Posterior vena cava (tissue), 2 donors: ENCODE measurements at regions of chr4 and their contacts with region 1.

Region 1: DNA sequence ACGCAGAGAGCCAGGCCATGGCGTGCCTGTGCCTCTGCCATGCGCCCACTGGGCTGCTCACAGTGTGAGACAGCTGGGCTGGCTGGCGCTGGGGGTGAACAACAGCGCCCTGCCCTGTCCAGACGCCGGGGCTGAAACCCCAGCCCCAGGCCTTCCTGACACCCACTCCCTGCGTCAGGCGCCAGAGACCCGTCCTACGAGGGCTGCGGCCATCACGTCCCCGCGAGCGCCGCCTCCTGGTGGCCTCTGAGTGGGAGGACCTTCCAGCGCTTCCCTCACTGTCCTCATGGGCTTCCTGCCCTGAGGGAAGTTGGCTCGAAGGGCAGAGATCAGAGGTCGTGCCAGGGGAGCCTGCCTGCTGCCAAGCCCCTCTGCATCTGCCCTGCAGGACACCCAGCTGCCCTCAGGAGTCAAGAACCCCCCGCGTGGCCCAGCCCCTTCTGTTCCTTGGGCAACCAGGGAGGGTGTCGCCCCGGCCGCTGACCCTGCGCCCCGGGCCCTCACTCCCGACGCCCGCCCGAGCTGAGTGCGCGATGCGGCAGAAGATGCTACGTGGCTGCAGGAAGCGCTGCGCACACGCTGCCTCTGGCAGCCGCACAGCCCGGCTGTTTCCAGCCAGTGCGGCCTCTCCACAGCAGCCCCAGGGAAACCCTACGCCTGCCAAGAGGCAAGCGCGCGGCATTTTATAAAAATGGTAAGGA is 16.2 kb downstream of the NELFA start:
- DNase-seq: peak; percentile 81

Region 2: DNA sequence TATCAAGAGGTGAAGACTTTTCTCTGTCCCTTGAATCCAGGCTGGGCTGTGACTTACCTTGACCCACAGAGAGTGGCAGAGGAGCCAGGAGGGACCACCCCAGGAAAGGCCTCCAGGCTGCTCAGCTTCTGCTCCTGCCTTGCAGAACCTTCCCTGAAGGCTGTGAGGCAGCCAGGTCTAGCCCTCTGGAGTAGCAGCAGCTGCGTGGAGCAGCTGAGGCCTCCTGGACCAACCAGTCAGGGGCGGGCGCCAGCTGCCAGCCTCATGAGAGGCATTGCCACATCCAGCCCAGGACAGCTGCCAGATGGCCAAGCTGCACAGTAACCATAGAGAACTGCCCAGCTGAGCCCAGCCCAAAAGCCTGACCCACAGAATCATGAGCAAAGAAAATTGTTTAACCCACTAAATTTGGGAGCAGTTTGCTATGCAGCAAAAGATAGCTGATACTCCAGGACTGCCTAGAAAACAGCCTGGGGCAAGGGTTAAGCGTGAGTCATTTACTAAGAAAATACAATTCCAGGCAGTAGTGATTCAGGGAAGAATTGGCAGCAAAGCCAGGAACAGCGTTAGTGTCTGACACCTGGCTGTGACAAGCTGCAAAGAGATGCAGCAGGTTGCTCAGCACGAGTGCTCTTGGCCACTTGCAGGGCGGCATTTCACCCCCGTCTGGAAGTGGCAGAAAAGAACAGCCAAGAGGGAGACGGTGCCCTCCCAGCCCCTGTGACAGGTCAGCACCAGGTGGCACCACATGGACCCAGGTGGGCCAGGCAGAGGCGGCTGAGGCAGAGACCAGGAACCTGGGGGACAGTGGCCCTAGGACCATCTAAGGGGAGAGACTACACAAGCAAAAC is 1382.0 kb before region 1 on chr4:
- intact Hi-C with region 1: loop called in 1 of 2 experiments (anchors 5 kb)
- DNase-seq: peak; percentile 57

Region 3: GRCh38 chr4:2843263-2843940 is 850.8 kb after region 1 on chr4 and contains the start of gene ADD1:
- intact Hi-C with region 1: no loop called
- DNase-seq: peak; percentile 97
- total RNA-seq, gene ADD1: 297 to 327 TPM